Activated T-helper 2 cell treated with anti-CD3 and anti-CD28 coated beads, Interferon-gamma antibody, Interleukin-2, Interleukin-4, amounts not matched to agents 10 μg/mL and 5 μg/mL and 100 μg/mL, durations not matched to agents 14 hours and 24 hours and 36 hours (primary cell): ENCODE measurements at regions of chr3 and their contacts with region 1.

Region 1: DNA sequence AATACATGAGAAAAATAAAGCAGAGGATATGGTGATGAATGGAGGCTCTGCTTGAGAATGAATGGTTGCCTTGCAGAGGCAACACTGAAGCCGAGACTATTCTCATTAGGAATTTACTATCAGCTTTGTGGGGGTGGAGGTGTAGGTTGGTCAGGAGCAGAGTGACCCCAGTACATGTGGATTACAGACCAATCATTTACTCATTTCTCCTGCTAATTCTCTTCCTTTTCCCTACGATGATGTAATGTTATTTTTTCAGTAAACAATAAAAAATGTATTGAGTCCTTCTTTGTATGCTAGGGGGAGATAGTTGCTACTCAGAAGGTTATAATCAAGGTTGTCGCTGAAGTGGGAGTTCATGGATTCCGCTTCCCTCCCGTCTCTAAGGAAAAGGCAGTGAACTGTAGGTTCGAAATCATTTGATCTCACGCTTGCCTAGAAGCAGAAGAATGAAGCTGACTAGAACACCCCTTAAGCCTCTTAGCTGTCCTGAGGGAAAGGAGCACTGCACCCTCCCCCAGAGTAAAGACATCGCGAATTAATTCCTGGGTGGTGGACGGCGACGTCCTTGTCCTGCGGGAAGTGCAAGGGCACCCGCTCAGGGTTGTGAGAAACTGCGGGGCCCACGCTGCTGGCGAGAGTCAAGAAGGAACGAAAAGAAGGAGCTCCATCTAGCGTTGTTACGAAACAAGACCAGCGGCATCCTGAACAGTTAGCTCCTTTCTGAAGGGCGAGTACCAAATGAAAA is 213.2 kb upstream of the PFN2 start:
- DNase-seq: peak; percentile 16
- H3K4me3 Mint-ChIP-seq: no peak overlapping the region
- H3K27ac Mint-ChIP-seq: no peak overlapping the region
- H3K4me1 Mint-ChIP-seq: no peaks in the 10 kb centered on the region
- H3K27me3 Mint-ChIP-seq: peaks cover 12% of the 10 kb centered on the region

Region 2: GRCh38 chr3:149936812-149937233 is 247.0 kb before region 1 on chr3:
- intact Hi-C with region 1: loop called (anchors 1 kb)
- DNase-seq: no peak
- H3K4me3 Mint-ChIP-seq: no peak overlapping the region
- H3K27ac Mint-ChIP-seq: no peak overlapping the region
- H3K4me1 Mint-ChIP-seq: peaks cover 13% of the 10 kb centered on the region
- H3K27me3 Mint-ChIP-seq: no peaks in the 10 kb centered on the region

Region 3: GRCh38 chr3:149969940-149970715 is 213.7 kb before region 1 on chr3:
- intact Hi-C with region 1: loop called (anchors 1 kb)
- DNase-seq: peak; percentile 63
- H3K4me3 Mint-ChIP-seq: peak overlapping the region; percentile 76
- H3K27ac Mint-ChIP-seq: no peak overlapping the region
- H3K4me1 Mint-ChIP-seq: peaks cover 12% of the 10 kb centered on the region
- H3K27me3 Mint-ChIP-seq: peaks cover 51% of the 10 kb centered on the region